ENCODE measurements at regions of chr10 and their contacts with region 1.

Region 1: GRCh38 chr10:3785257-3785850 is 345 bp upstream of the KLF6 start:
- DNase-seq: peak; percentile 99
- ATAC-seq: peak; percentile 82 to 85

Region 2: DNA sequence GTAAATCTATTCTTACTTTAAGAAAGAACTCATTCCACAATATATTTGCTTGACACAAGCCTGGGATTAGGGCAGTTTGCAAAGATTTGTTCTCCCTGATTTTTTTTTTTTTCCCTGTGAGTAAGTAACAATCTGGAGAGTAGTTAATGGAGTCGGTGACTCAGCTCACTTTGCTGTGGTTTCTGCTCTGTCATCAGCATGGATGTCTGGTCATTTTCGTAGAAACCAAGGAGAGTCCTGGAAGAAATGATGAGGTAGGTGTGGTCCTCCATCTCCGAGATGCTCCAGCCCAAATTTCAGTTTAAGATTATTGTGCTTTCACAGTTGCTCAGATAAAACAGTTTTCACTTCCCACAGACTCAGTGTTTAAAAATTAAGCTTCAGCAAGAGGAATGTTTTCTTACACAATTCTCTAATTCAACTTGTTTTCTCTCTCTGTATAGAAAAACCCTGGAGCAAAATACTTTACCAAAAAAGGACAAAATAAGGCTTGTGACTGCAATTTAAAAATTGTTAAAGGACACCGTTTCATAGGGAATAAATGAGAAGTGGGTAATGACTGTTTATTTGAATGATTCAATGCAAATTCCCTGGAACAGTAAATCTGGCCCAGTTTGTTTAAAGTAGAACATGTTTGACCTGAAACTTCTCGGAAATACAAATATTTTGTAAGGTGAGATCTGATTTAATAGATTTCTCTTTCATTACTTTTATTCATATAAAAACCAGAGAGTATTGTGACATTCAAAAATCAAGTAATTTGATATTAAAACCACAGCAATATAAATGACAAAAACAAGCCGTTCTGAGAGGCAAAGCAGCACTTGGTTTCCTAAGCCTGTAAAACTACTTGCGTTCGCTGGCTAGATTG is 536.2 kb before region 1 on chr10:
- intact Hi-C with region 1: loop called in 1 of 2 experiments (anchors 10 kb)
- DNase-seq: no peak
- ATAC-seq: peak; percentile 47 to 98

Region 3: GRCh38 chr10:3525832-3526449 is 259.4 kb before region 1 on chr10:
- intact Hi-C with region 1: loop called in 1 of 2 experiments (anchors 5 kb)
- DNase-seq: no peak
- ATAC-seq: peak in 1 of 2 donors; percentile 94

Region 4: GRCh38 chr10:4081685-4082111 is 296.3 kb after region 1 on chr10:
- intact Hi-C with region 1: loop called in 1 of 2 experiments (anchors 5 kb)
- DNase-seq: peak; percentile 44
- ATAC-seq: peak; percentile 49 to 50

Region 5: GRCh38 chr10:4241724-4242345 is 456.5 kb after region 1 on chr10:
- intact Hi-C with region 1: loop called in 1 of 2 experiments (anchors 5 kb)
- DNase-seq: peak; percentile 40
- ATAC-seq: peak; percentile 88 to 91

Region 6: DNA sequence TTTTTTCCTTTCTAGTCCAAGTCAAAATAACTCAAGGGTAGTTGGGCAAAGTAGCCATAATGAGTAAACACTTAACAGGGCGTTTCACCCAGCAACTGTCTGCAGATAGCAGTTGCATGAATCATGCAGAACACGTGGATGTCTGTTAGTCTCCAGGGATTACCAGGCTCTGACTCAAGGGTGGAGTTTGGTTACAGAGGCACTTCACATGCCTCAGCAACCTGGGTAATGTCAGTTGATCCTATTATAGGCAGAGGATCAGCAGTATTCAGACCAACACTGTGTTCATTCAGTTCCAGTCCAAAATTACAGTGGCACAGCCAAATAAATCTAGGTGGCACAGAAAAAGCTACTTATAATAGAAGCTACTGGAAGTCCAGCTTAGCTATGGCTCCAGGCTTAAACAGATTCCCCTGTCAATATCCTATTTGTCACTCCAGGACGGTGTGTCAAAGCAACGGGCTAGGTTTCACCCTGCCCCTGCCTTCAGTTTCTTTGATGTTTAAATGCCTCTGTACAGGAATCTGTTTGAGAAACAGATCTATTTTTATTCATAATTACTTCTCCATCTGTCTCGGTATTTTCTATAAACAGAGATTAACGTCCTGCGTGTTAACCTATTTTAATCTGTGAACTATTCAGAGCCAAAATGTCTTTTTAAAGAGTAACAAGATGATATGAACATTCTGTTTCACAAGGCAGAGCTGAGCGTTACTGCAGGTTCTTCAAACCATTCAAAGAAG is 878.0 kb after region 1 on chr10:
- intact Hi-C with region 1: loop called (anchors 10 kb)
- DNase-seq: peak; percentile 59
- ATAC-seq: peak; percentile 89 to 98

Measured in left cardiac atrium (tissue), 4 donors.